WTC11 (cell line): ENCODE measurements at regions of chr2 and their contacts with region 1.

Region 1: DNA sequence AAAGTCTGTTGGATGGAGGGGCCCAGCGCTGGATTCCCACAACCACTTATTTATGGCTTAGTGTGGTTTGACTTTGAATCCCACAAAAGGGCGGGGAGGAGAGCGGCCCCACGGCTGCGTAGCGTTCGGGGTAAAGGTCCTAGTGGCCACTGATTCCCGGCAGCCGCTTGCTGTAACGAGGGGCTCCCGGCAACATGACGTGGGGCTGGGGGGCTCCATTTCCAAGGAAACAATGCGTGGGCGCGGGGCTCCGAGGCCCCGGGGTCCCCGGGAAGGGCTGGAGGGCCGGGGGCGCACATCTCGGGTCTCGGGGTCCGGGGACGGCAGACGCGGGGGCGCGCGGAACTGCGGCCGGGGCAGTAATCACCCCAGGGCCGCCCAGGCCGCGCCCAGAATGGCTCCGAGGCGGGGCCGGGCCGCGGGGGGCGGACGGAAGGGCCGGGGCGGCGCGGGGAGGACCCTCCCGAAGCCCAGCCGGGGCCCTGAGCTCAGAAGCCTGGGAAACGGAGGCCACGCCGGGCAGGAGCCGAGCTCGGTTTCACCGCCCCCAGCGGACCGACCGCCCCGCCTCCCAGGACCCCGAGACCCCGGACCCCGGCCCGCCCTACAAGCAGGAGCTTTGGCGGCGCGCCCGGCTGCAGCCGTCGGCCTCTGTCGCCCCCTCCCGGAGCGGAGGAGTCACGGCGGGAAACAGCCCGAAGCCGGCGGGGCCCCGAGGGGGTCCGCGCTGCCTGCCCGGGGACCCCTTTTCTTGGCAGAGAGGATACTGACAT is 11.9 kb upstream of the MLPH start:
- DNase-seq: peak; percentile 88
- ATAC-seq: peak; percentile 81
- H3K4me3 Mint-ChIP-seq: peak overlapping the region; percentile 84
- H3K27ac Mint-ChIP-seq: peak overlapping the region; percentile 53; the same call in 1 of the 2 replicates
- H3K4me1 Mint-ChIP-seq: peaks cover 18% of the 10 kb centered on the region
- H3K27me3 Mint-ChIP-seq: peaks cover 47% of the 10 kb centered on the region
- CTCF ChIP-seq: peak; percentile 70

Region 2: GRCh38 chr2:237434866-237435311 is 40.2 kb before region 1 on chr2:
- CTCF ChIA-PET with region 1: interaction called, 15 read pairs
- POLR2A ChIA-PET with region 1: interaction called, 3 read pairs
- DNase-seq: no peak
- ATAC-seq: no peak
- H3K4me3 Mint-ChIP-seq: no peak overlapping the region
- H3K27ac Mint-ChIP-seq: no peak overlapping the region
- H3K4me1 Mint-ChIP-seq: peaks cover 42% of the 10 kb centered on the region
- H3K27me3 Mint-ChIP-seq: no peaks in the 10 kb centered on the region
- CTCF ChIP-seq: no peak

Region 3: DNA sequence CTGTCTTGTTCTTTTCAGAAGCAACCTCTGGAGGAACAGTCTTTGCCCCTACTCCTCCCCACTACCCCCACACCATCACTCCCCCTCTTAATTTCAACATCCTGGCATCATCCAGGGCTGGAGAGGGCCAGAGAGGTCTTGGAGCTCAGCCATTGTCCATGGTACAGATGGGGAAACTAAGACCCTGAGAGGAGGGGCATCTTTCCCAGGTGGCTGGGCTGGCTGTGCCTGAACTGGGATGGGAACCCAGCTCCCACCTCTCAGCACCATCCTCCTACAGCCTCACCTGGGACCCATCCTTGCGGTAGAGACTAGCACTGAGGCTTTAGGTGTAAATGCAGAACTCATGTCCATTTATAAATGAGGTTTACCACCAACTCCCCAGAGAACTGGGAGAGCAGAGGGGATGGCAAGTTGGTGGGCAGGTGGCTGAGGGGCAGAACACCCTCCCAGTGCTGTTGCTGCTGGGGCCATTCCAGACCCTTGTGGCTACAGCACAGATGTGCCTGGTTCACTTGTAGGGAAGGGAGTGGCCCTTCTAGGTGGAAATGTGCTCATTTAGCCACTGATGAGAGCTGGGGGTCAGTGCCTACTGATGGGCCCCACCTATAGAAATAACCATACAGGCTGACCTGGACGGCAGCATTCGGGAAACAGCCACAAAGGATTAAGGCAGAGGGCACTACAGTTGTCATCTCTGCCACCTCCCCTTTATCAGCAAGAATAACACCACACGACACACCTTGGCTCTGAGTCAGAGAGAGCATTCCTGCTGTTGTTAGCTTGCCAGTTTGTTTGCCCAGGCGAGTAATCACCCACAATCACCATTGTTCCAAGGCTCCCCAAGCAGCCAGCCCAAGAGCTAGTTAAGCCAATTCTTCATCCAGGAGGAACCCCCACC is 14.0 kb after region 1 on chr2:
- CTCF ChIA-PET with region 1: interaction called, 43 read pairs
- POLR2A ChIA-PET with region 1: interaction called, 3 read pairs
- DNase-seq: no peak
- ATAC-seq: no peak
- H3K4me3 Mint-ChIP-seq: no peak overlapping the region; the same call in 1 of the 2 replicates
- H3K27ac Mint-ChIP-seq: peak overlapping the region; percentile 3; the same call in 1 of the 2 replicates
- H3K4me1 Mint-ChIP-seq: peaks cover 39% of the 10 kb centered on the region
- H3K27me3 Mint-ChIP-seq: peaks cover 65% of the 10 kb centered on the region
- CTCF ChIP-seq: no peak